ENCODE measurements at regions of chr20 and their contacts with region 1.

Region 1: DNA sequence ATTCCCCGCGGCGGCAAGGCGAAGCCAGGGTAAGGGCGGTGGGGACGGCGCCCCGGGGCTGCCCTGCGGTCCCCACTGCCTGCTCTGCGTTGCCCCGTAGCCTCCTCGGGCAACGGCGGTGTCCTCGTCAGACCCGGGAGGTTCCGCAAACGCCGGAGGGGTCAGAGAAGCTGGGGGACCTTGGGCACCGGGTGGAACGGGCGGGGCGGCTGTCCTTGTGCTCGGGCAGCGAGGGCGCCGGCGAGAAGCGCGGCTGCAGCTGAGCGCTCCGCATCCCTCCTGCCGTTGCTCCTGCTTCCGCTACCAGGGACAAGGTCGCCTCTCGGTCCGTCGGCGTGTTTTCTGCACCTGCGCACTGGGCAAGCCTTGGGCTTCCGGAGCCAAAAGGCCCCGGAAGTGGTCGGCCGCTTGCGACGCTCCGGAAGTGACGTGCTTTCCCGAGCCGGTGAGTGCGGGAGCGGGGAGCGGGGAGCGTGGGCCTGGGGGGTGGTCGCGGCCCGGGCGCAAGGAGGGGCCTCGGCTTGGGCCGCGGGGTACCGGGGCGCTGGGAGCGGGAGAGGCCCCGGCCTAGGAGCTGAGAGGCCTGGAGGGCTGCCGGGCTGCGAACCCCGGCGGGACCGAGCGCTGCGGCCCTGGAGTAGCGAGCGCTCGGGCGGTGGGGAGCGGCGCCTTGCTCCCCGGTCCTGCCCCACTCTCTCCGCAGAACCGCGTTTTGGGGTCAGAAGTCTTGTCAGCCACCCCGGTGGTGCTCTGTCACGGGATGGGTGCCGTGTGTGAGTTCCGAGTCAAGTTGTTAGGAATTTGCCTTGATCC is at the start of gene MTG2:
- DNase-seq: peak; percentile 99
- H3K4me3 Mint-ChIP-seq: peak within 1 kb of the TSS; percentile 92
- H3K27ac Mint-ChIP-seq: peak within 1 kb of the TSS; percentile 95
- H3K4me1 Mint-ChIP-seq: peaks cover 25% of the 10 kb centered on the region
- H3K27me3 Mint-ChIP-seq: no peaks in the 10 kb centered on the region
- total RNA-seq, gene MTG2: 43.0 and 44.4 TPM in 2 replicates

Region 2: DNA sequence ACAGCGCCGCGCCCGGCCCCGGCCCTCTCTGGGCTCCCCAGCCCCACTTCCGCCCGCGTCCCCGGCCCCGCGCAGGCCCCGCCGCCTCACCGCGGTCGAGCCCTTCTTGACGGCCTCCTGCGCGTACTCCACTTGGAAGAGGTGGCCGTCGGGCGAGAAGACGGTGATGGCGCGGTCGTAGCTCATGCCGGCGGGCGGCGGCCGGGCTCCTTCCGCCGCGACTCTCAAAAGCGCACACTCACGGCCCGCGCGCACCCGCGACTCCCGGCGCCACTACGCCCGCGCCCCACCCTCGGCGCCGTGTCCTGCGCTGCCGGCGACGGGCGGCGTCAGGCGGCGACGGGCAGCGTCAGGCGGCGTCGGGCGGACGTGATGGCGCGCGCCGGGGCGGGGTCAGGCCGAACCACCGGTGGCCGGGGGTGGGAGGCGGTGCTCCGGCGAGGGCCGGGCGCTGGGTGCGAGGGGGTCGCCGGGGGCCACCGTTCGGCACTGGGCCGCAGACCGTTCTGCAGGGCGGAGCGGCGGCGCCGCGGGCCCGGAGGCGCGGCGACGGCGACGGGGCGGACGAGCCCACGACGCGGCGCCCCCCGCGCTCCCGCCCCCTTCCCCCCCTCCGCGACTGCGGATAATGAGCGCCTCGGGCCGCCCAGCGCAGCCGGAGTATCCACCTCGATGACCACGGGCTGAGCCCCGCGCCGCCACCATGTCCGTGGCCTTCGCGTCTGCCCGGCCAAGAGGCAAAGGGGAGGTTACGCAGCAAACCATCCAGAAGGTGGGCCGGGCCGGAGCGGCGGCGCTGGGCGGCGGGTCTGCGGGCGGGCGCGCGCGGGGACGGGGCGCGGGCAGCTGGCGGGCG is 39.5 kb before region 1 on chr20 and contains the starts of genes PSMA7 and SS18L1:
- intact Hi-C with region 1: loop called (anchors 1 kb)
- DNase-seq: peak; percentile 96
- H3K4me3 Mint-ChIP-seq: peak within 1 kb of the TSS; percentile 94
- H3K27ac Mint-ChIP-seq: peak within 1 kb of the TSS; percentile 91
- H3K4me1 Mint-ChIP-seq: peaks cover 35% of the 10 kb centered on the region
- H3K27me3 Mint-ChIP-seq: no peaks in the 10 kb centered on the region
- total RNA-seq, gene PSMA7: 434 and 449 TPM in 2 replicates
- total RNA-seq, gene SS18L1: 26.7 and 29.0 TPM in 2 replicates

Region 3: GRCh38 chr20:62156592-62157386 is 26.0 kb before region 1 on chr20:
- intact Hi-C with region 1: loop called (anchors 2 kb)
- DNase-seq: peak; percentile 92
- H3K4me3 Mint-ChIP-seq: no peak overlapping the region
- H3K27ac Mint-ChIP-seq: no peak overlapping the region
- H3K4me1 Mint-ChIP-seq: peaks cover 14% of the 10 kb centered on the region
- H3K27me3 Mint-ChIP-seq: peaks cover 1% of the 10 kb centered on the region

Region 4: GRCh38 chr20:62237801-62238571 is 55.2 kb after region 1 on chr20 and contains the start of gene OSBPL2:
- intact Hi-C with region 1: loop called (anchors 1 kb)
- DNase-seq: peak; percentile 100
- H3K4me3 Mint-ChIP-seq: peak within 1 kb of the TSS; percentile 81
- H3K27ac Mint-ChIP-seq: peak within 1 kb of the TSS; percentile 78
- H3K4me1 Mint-ChIP-seq: peaks cover 26% of the 10 kb centered on the region
- H3K27me3 Mint-ChIP-seq: no peaks in the 10 kb centered on the region
- total RNA-seq, gene OSBPL2: 29.0 and 29.2 TPM in 2 replicates

Measured in activated CD4-positive, alpha-beta T cell treated with anti-CD3 and anti-CD28 coated beads, Interleukin-2, amount 10 ng/mL, durations not matched to agents 24 days and 14 days (primary cell).